A673 (cell line): ENCODE measurements at regions of chr19 and their contacts with region 1.

Region 1: GRCh38 chr19:45862564-45863334 is at the start of gene SYMPK:
- DNase-seq: peak; percentile 99
- H3K4me3 ChIP-seq: peak within 1 kb of the TSS; percentile 67
- H3K27ac ChIP-seq: peak within 1 kb of the TSS; percentile 91
- H3K4me1 ChIP-seq: peaks cover 6% of the 10 kb centered on the region
- H3K27me3 ChIP-seq: peaks cover 41% of the 10 kb centered on the region
- CTCF ChIP-seq: no peak
- total RNA-seq, gene SYMPK: 85.5 and 92.4 TPM in 2 replicates

Region 2: DNA sequence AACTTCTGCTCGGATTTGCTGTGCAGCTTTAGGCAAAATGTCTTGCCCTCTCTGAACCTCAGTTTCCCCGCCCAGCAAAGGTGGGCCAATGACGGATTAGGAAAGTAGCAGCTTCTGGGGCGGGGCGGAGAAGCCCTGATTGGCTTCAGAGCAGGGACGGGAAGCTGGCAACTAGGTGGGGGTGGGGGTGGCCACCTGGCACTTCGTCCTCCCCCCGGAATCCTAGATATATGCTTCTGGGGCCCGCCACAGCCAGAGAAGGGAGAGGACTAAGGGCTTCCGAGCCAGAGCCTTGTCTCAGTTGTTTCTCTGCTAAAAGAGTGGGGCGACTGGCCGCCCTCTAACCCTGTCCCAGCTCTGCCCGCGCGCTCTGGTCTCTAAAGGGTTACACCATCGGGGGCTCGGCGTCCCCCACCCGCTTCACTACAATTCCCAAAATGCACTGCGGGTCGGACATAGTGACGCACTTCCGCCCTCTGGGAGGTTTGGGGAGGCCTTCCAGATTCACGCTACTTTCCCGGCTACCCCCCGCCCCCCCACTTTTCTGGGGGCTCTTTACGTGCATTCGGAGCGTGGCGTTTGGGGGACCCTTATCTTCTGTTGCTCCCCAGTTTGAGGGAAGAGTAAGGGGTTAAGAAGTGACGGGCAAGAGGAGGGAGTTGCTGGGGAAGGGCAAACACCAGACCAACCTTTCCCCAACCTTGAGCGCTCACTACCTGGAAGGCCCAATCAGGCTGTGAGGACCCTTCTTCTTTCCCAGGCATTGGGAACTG is 23.9 kb after region 1 on chr19:
- CTCF ChIA-PET with region 1: no interaction called
- POLR2A ChIA-PET with region 1: no interaction called
- intact Hi-C with region 1: loop called (anchors 1 kb)
- DNase-seq: peak; percentile 97
- H3K4me3 ChIP-seq: peak overlapping the region; percentile 79
- H3K27ac ChIP-seq: peak overlapping the region; percentile 90
- H3K4me1 ChIP-seq: peaks cover 29% of the 10 kb centered on the region
- H3K27me3 ChIP-seq: no peaks in the 10 kb centered on the region
- CTCF ChIP-seq: no peak